ENCODE measurements at regions of chr10 and their contacts with region 1.

Region 1: DNA sequence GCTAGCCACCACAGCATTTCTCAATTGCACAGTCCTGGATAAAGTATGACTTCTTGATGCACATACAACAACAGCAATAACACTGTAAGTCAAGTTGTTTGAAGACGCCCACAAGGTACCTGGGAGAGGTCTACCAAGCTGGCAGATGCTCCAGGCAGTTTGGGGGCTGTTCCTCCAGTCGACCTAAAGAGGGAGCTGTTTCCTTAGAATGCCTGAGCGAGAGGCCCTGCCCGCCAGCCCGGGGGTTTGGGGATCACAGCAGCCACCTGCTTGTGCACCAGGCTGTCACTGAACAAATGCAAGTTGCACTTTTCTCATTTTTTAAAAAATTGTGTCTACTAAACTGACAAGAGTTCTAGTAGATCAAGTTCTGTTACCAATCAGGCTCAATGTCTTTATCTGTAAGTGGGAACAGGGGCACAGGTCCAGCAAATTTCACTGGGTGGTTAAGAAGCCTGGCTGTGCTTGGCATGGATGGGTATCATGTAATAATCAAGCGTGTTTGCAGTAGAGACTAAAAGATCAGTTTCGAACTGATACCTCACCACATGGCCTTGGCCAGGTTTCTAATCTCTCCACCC is 193.8 kb upstream of the ADO start:
- DNase-seq: peak; percentile 91
- H3K4me3 ChIP-seq: no peak overlapping the region
- H3K27ac ChIP-seq: no peak overlapping the region
- H3K4me1 ChIP-seq: peaks cover 19% of the 10 kb centered on the region
- CTCF ChIP-seq: peak; percentile 99

Region 2: DNA sequence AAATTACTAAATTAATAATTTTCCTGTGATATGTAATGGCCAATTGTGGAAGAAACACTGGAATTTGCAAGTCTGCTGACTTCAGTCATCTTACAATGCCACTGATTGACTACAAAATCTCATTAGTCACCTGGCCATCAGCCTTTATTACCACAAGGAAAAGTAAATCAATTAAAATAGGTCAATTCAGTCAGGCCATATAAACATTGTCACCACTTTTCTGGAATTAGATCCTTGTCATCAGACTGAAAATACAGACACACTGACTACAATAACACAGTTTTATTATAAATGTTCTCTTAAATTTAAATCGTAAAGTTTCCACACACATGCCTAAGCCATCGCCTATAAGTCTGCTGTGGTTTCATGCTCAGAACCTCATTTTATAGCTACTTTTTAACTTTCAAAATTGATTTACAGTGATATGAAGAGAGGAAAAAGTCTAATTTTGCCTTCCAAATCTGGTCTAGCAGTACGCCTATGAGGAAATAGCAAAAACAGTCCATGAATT is 396.3 kb before region 1 on chr10:
- CTCF ChIA-PET with region 1: no interaction called
- POLR2A ChIA-PET with region 1: no interaction called
- intact Hi-C with region 1: no loop called
- DNase-seq: no peak
- H3K4me3 ChIP-seq: no peak overlapping the region
- H3K27ac ChIP-seq: no peak overlapping the region
- H3K4me1 ChIP-seq: no peaks in the 10 kb centered on the region
- CTCF ChIP-seq: no peak

Region 3: GRCh38 chr10:62653254-62653653 is 42.5 kb after region 1 on chr10:
- CTCF ChIA-PET with region 1: no interaction called
- POLR2A ChIA-PET with region 1: interaction called, 4 read pairs
- intact Hi-C with region 1: loop called (anchors 2 kb)
- DNase-seq: peak; percentile 99
- H3K4me3 ChIP-seq: peak overlapping the region; percentile 42
- H3K27ac ChIP-seq: peak overlapping the region; percentile 96
- H3K4me1 ChIP-seq: peaks cover 74% of the 10 kb centered on the region
- CTCF ChIP-seq: no peak

Region 4: GRCh38 chr10:62666275-62666674 is 55.5 kb after region 1 on chr10:
- CTCF ChIA-PET with region 1: no interaction called
- POLR2A ChIA-PET with region 1: no interaction called
- intact Hi-C with region 1: no loop called
- DNase-seq: no peak
- H3K4me3 ChIP-seq: no peak overlapping the region
- H3K27ac ChIP-seq: no peak overlapping the region
- H3K4me1 ChIP-seq: no peaks in the 10 kb centered on the region
- CTCF ChIP-seq: no peak

Region 5: DNA sequence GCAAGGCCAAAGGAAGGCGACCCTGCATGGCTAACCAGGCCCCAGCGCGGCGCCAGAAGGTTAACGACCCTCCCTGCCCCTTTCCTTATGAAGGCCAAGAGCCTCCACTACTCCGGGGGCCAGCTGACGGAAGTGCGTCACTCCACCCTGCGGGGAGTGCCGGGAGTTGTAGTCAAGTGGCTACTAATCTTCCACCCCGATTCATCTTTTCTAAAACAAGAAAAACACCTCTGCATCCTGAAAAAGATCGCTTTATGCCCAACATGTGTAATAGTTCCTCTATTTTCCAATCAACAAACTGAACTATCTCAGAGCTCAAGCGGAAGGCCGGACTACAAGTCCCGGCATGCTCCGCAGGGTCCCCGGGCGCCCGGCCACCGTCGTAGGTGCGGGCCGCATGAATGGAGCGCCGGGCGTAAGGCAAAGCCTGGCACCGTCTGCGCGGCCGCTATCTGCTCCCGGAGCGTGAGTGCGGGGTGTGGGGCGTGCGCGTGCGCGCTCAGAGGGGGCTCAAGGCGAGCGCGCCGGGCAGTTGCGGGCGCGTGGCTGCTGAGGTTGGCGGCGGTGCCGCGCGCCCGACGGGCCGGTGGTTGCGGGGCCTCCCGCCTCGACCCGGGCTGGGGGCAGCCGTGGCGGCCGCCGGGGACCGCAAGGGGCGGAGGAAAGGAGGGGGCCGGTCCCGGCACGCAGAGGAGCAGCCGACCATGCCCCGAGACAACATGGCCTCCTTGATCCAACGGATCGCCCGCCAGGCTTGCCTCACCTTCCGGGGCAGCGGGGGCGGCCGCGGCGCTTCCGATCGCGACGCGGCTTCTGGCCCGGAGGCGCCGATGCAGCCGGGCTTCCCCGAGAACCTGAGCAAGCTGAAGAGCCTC is 193.9 kb after region 1 on chr10 and contains the start of gene ADO:
- CTCF ChIA-PET with region 1: interaction called, 4 read pairs
- POLR2A ChIA-PET with region 1: interaction called, 3 read pairs
- intact Hi-C with region 1: loop called (anchors 1 kb)
- DNase-seq: peak; percentile 89
- H3K4me3 ChIP-seq: peak within 1 kb of the TSS; percentile 88
- H3K27ac ChIP-seq: peak within 1 kb of the TSS; percentile 66
- H3K4me1 ChIP-seq: peaks cover 39% of the 10 kb centered on the region
- CTCF ChIP-seq: no peak
- total RNA-seq, gene ADO: 33.1 and 43.1 TPM in 2 replicates

Region 6: GRCh38 chr10:63083904-63084689 is 473.4 kb after region 1 on chr10:
- CTCF ChIA-PET with region 1: no interaction called
- POLR2A ChIA-PET with region 1: no interaction called
- intact Hi-C with region 1: loop called (anchors 5 kb)
- DNase-seq: peak; percentile 74
- H3K4me3 ChIP-seq: no peak overlapping the region
- H3K27ac ChIP-seq: no peak overlapping the region
- H3K4me1 ChIP-seq: no peaks in the 10 kb centered on the region
- CTCF ChIP-seq: peak; percentile 85

Measured in OCI-LY7 (cell line).